ENCODE measurements at regions of chr19 and their contacts with region 1.

Region 1: GRCh38 chr19:8243691-8244090 is 34.5 kb downstream of the CERS4 start:
- DNase-seq: no peak
- H3K4me3 ChIP-seq: no peak overlapping the region
- H3K27ac ChIP-seq: no peak overlapping the region
- H3K4me1 ChIP-seq: peaks cover 7% of the 10 kb centered on the region
- H3K27me3 ChIP-seq: no peaks in the 10 kb centered on the region
- CTCF ChIP-seq: no peak

Region 2: DNA sequence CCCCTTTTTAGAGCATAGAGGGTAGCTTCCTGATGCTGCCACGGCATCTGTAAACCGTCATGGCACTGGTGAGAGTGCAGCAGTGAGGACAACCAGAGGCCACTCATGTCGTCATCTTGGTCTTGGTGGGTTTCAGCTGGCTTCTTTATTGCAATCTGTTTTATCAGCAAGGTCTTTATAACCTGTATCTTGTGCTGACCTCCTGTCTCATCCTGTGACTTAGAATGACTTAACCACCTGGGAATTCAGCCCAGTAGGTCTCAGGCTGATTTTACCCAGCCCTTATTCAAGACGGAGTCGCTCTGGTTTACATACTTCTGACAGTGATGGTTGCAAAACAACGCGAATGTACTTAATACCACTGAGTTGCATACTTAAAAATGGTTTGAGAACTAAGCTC is 79.9 kb before region 1 on chr19:
- CTCF ChIA-PET with region 1: interaction called, 11 read pairs
- POLR2A ChIA-PET with region 1: interaction called, 6 read pairs
- intact Hi-C with region 1: no loop called
- DNase-seq: no peak
- H3K4me3 ChIP-seq: no peak overlapping the region
- H3K27ac ChIP-seq: no peak overlapping the region
- H3K4me1 ChIP-seq: peaks cover 6% of the 10 kb centered on the region
- H3K27me3 ChIP-seq: no peaks in the 10 kb centered on the region
- CTCF ChIP-seq: no peak